ENCODE measurements at regions of chr18 and their contacts with region 1.

Region 1: GRCh38 chr18:11020877-11021414 is 128.4 kb downstream of the PIEZO2 start:
- DNase-seq: no peak
- ATAC-seq: peak; percentile 59
- H3K4me3 ChIP-seq: peak overlapping the region; percentile 53; the same call in 1 of the 2 replicates
- H3K27ac ChIP-seq: peak overlapping the region; percentile 54
- H3K4me1 ChIP-seq: peaks cover 34% of the 10 kb centered on the region
- H3K27me3 ChIP-seq: no peaks in the 10 kb centered on the region
- CTCF ChIP-seq: no peak
- EP300 ChIP-seq: no peak
- POLR2A ChIP-seq: no peak
- RAD21 ChIP-seq: no peak

Region 2: GRCh38 chr18:11005528-11005927 is 15.4 kb before region 1 on chr18:
- CTCF ChIA-PET with region 1: interaction called, 6 read pairs
- POLR2A ChIA-PET with region 1: interaction called, 16 read pairs
- RAD21 ChIA-PET with region 1: interaction called, 5 read pairs
- SMC1A ChIA-PET with region 1: interaction called, 42 read pairs
- in situ Hi-C with region 1: no loop called
- intact Hi-C with region 1: no loop called
- DNase-seq: peak; percentile 58
- ATAC-seq: peak; percentile 76
- H3K4me3 ChIP-seq: no peak overlapping the region
- H3K27ac ChIP-seq: peak overlapping the region; percentile 82
- H3K4me1 ChIP-seq: peaks cover 31% of the 10 kb centered on the region
- H3K27me3 ChIP-seq: no peaks in the 10 kb centered on the region
- CTCF ChIP-seq: no peak
- EP300 ChIP-seq: peak in 1 of 2 experiments; percentile 76; a peak in 2 of 4 replicates
- POLR2A ChIP-seq: no peak
- RAD21 ChIP-seq: no peak

Region 3: DNA sequence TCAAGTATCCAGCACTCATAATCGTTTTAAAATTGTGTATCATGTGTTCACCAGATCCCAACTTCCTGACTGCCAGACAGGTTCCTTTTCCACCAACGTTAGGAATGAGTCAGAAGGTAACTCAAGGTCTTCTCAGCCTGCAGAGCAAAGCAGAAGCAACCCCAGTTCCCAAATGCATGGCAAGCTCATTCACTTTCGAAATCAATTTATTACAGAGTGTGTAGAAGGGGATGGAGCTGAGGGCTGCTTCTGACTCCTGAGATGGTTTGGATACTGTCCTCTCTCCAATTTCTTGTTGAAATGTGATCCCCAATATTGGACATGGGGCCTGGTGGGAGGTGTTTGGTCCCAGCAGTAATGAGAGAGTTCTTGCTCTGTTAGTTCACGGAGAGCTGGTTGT is 13.9 kb after region 1 on chr18:
- CTCF ChIA-PET with region 1: interaction called, 49 read pairs
- POLR2A ChIA-PET with region 1: interaction called, 3 read pairs
- RAD21 ChIA-PET with region 1: interaction called, 24 read pairs
- SMC1A ChIA-PET with region 1: interaction called, 18 read pairs
- in situ Hi-C with region 1: no loop called
- intact Hi-C with region 1: no loop called
- DNase-seq: no peak
- ATAC-seq: peak; percentile 83
- H3K4me3 ChIP-seq: peak overlapping the region; percentile 6; the same call in 1 of the 2 replicates
- H3K27ac ChIP-seq: peak overlapping the region; percentile 52
- H3K4me1 ChIP-seq: peaks cover 38% of the 10 kb centered on the region
- H3K27me3 ChIP-seq: no peaks in the 10 kb centered on the region
- CTCF ChIP-seq: no peak
- EP300 ChIP-seq: no peak
- POLR2A ChIP-seq: no peak
- RAD21 ChIP-seq: no peak

Region 4: GRCh38 chr18:11178951-11179549 is 158.1 kb after region 1 on chr18:
- CTCF ChIA-PET with region 1: no interaction called
- POLR2A ChIA-PET with region 1: no interaction called
- RAD21 ChIA-PET with region 1: no interaction called
- SMC1A ChIA-PET with region 1: no interaction called
- in situ Hi-C with region 1: no loop called
- intact Hi-C with region 1: no loop called
- DNase-seq: no peak
- ATAC-seq: no peak
- H3K4me3 ChIP-seq: no peak overlapping the region
- H3K27ac ChIP-seq: no peak overlapping the region
- H3K4me1 ChIP-seq: no peaks in the 10 kb centered on the region
- H3K27me3 ChIP-seq: peaks cover 0 to 2% of the 10 kb centered on the region in 2 experiments; a peak in 1 of 4 replicates
- CTCF ChIP-seq: no peak
- EP300 ChIP-seq: no peak
- POLR2A ChIP-seq: no peak
- RAD21 ChIP-seq: no peak